ENCODE measurements at regions of chr5 and their contacts with region 1.

Region 1: DNA sequence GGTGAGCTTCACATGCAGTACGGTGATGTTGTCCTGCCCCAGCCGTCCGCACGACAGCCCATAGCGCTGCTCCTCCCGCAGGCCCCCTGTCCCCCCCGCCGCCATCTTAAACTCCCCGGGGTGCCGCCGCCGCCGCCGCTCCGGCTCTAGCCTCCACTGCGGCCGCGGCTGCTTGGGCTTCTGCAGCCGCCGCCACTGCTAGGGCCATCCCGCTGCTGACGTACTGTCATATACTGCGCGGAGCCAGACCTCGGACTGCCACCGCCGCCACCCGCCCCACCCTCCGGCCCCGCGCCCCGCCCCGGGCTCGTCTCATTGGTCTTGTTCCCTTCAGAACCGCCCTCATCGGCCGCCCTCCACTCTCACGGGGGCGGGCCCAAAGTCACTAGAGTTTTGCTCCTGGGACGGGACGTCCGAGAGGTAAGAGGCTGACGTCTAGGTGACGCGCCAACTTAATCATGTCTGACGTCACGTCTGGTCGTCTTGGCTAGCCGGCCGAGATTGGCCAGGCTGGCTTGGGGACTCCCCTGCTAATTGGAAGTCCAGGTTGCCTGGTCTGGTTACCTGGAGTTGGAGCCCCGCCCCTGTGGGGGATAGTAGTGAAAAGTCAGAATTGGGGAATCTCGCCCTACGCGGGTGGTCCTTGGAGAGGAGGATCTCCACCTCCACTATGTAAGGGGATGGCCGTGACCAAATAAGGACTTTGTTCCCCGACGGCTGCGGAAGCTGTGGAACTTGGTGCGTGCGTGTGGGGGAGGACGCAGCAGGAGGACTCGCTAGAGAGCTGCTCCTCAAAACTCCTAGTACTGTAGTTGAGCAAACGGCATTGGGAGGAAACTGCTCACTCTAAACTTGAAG is at the start of gene ELL2:
- DNase-seq: peak; percentile 88 to 99 (median 96)
- ATAC-seq: peak; percentile 89
- H3K4me3 ChIP-seq: peak within 1 kb of the TSS; percentile 64 to 82
- H3K4me3 Mint-ChIP-seq: peak within 1 kb of the TSS; percentile 96
- H3K27ac ChIP-seq: peak within 1 kb of the TSS; percentile 73 to 87
- H3K27ac Mint-ChIP-seq: peak within 1 kb of the TSS; percentile 99
- H3K4me1 ChIP-seq: peaks cover 12% of the 10 kb centered on the region
- H3K4me1 Mint-ChIP-seq: peaks cover 36% of the 10 kb centered on the region
- H3K27me3 ChIP-seq: no peaks in the 10 kb centered on the region
- H3K27me3 Mint-ChIP-seq: no peaks in the 10 kb centered on the region
- CTCF ChIP-seq: no peak
- total RNA-seq, gene ELL2: 189 to 200 TPM

Region 2: GRCh38 chr5:94945656-94946055 is 1016.2 kb before region 1 on chr5:
- CTCF ChIA-PET with region 1: no interaction called
- POLR2A ChIA-PET with region 1: no interaction called
- intact Hi-C with region 1: no loop called
- DNase-seq: no peak
- ATAC-seq: no peak
- H3K4me3 ChIP-seq: no peak overlapping the region
- H3K4me3 Mint-ChIP-seq: no peak overlapping the region
- H3K27ac ChIP-seq: no peak overlapping the region
- H3K27ac Mint-ChIP-seq: no peak overlapping the region
- H3K4me1 ChIP-seq: no peaks in the 10 kb centered on the region
- H3K4me1 Mint-ChIP-seq: no peaks in the 10 kb centered on the region
- H3K27me3 ChIP-seq: no peaks in the 10 kb centered on the region
- H3K27me3 Mint-ChIP-seq: no peaks in the 10 kb centered on the region
- CTCF ChIP-seq: no peak

Region 3: GRCh38 chr5:95554647-95555548 is 406.9 kb before region 1 on chr5 and contains the starts of genes ARSK and SKIC3:
- CTCF ChIA-PET with region 1: no interaction called
- POLR2A ChIA-PET with region 1: no interaction called
- intact Hi-C with region 1: loop called (anchors 1 to 10 kb)
- DNase-seq: peak; percentile 80 to 99 (median 91)
- ATAC-seq: peak; percentile 86
- H3K4me3 ChIP-seq: peak within 1 kb of the TSS; percentile 64 to 77
- H3K4me3 Mint-ChIP-seq: peak within 1 kb of the TSS; percentile 96
- H3K27ac ChIP-seq: peak within 1 kb of the TSS; percentile 74 to 84
- H3K27ac Mint-ChIP-seq: peak within 1 kb of the TSS; percentile 98
- H3K4me1 ChIP-seq: peaks cover 18% of the 10 kb centered on the region
- H3K4me1 Mint-ChIP-seq: peaks cover 47% of the 10 kb centered on the region
- H3K27me3 ChIP-seq: no peaks in the 10 kb centered on the region
- H3K27me3 Mint-ChIP-seq: no peaks in the 10 kb centered on the region
- CTCF ChIP-seq: no peak
- total RNA-seq, gene ARSK: 2.6 to 3.1 TPM
- total RNA-seq, gene SKIC3: 46.7 to 51.8 TPM

Region 4: DNA sequence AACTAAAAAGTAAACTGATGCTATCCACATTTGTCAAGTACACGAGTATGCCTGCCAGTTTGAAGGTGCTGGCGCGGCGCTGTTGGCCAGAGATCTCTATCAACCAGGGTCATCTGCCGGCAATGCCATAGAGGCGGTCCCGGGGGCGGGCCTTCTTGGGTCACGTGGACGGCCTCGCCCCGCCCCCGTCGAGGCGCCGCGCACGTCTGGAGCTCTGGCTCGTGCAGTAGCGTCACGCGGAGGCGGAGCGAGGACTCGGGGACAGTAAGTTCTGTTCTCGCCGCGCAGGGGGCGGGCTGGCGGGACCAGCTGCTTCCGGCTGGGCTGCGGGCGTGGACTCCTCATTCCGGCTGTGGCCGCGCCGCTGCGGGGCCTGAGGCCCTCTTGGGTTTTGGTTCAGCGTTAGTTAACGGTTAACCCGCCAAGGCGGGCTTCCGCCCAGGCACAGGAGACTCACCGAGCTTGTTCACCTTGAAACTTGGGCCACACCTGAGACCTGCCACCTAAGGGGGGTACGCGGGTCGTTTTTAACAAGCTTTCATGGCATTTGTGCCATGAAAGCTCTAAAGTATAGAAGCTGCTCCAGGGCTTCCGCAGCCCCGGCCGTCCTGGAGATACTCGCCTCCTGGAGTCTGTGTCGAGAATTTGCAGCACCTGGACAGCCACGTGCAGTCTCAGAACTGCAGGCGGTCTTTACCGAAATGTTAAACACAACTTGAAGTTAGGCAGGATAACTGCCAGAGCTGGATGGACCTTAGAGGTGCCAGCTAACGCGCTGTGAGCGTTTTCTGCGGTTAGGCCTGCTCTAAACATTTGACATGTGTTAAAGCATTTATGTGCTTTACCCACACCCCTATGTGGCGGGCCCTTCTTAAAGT is 315.1 kb before region 1 on chr5 and contains the start of gene RFESD:
- CTCF ChIA-PET with region 1: no interaction called
- POLR2A ChIA-PET with region 1: no interaction called
- intact Hi-C with region 1: loop called (anchors 1 to 5 kb)
- DNase-seq: peak; percentile 86 to 96 (median 93)
- ATAC-seq: peak; percentile 93
- H3K4me3 ChIP-seq: peak within 1 kb of the TSS; percentile 67 to 77
- H3K4me3 Mint-ChIP-seq: peak within 1 kb of the TSS; percentile 91
- H3K27ac ChIP-seq: peak within 1 kb of the TSS; percentile 76 to 85
- H3K27ac Mint-ChIP-seq: peak within 1 kb of the TSS; percentile 94
- H3K4me1 ChIP-seq: peaks cover 20% of the 10 kb centered on the region
- H3K4me1 Mint-ChIP-seq: peaks cover 40% of the 10 kb centered on the region
- H3K27me3 ChIP-seq: no peaks in the 10 kb centered on the region
- H3K27me3 Mint-ChIP-seq: no peaks in the 10 kb centered on the region
- CTCF ChIP-seq: peak; percentile 22
- total RNA-seq, gene RFESD: 1.00 to 1.7 TPM

Region 5: DNA sequence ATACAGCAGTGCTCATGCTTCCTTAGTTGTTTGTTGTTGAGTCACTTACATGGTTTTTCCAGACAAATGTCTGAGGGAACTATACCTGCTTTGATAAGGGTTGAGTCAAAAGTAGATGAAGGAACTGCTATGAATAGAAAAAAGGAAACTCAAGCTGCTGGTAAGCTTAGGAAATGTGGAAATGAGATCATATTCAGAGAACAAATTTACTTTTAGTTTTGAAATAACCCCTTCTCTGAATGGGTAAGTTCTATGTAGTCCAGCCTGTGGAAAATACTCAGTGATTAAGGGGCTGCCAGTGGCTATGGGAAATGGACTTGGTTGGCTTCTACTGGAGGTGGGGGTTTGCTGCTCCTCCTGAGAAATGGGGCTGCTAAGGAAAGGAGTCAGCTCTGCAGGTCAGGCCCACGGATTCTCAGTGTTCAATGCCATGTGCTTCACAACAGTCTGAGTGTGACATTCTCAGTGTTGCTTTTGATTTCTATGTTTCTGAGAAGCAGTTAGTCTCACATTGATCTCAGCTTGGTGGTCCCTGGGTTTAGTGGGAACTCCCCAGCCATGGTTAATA is 91.7 kb before region 1 on chr5:
- CTCF ChIA-PET with region 1: interaction called, 5 read pairs
- POLR2A ChIA-PET with region 1: interaction called, 10 read pairs
- intact Hi-C with region 1: loop called in 1 of 2 experiments (anchors 2 kb)
- DNase-seq: peak in 1 of 9 experiments; percentile 35
- ATAC-seq: peak; percentile 33
- H3K4me3 ChIP-seq: no peak overlapping the region
- H3K4me3 Mint-ChIP-seq: peak overlapping the region; percentile 53
- H3K27ac ChIP-seq: no peak overlapping the region
- H3K27ac Mint-ChIP-seq: no peak overlapping the region
- H3K4me1 ChIP-seq: peaks cover 32% of the 10 kb centered on the region
- H3K4me1 Mint-ChIP-seq: peaks cover 31% of the 10 kb centered on the region
- H3K27me3 ChIP-seq: no peaks in the 10 kb centered on the region
- H3K27me3 Mint-ChIP-seq: no peaks in the 10 kb centered on the region
- CTCF ChIP-seq: no peak

Region 6: DNA sequence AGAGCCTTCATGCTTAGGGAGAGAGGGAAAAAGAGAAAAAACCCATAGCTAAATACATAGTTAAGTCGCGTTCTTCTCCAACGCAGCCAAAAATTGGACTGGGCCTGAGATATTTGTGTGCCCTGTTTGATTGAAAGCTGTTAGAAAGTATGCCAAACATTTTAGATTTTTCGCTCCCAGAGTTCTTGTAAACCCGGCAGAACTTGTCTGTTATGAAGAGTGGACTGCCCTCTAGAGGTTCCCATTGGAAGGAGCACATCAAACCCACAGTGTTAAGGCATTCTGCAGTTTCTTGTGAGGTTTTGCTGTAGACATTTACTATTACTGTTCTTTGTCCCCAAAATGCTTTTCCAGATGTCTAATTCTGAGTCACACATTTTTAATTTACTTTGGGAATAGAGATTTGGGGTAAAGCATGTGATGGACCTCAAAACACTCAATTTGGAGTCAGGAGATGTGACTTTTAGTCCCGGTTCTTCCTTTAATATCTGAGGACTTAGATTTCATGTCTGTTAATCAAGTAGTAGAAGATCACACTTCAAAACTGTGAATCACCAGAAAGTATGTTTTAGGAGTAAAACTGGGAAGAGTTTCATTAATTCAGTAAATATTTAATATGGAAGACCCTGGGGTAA is 374.6 kb after region 1 on chr5:
- CTCF ChIA-PET with region 1: interaction called, 3 read pairs
- POLR2A ChIA-PET with region 1: no interaction called
- intact Hi-C with region 1: loop called in 1 of 2 experiments (anchors 1 kb)
- DNase-seq: peak; percentile 19 to 81 (median 57)
- ATAC-seq: peak; percentile 97
- H3K4me3 ChIP-seq: no peak overlapping the region
- H3K4me3 Mint-ChIP-seq: no peak overlapping the region
- H3K27ac ChIP-seq: no peak overlapping the region
- H3K27ac Mint-ChIP-seq: no peak overlapping the region
- H3K4me1 ChIP-seq: no peaks in the 10 kb centered on the region
- H3K4me1 Mint-ChIP-seq: no peaks in the 10 kb centered on the region
- H3K27me3 ChIP-seq: no peaks in the 10 kb centered on the region
- H3K27me3 Mint-ChIP-seq: peaks cover 14% of the 10 kb centered on the region
- CTCF ChIP-seq: peak; percentile 92

Region 7: DNA sequence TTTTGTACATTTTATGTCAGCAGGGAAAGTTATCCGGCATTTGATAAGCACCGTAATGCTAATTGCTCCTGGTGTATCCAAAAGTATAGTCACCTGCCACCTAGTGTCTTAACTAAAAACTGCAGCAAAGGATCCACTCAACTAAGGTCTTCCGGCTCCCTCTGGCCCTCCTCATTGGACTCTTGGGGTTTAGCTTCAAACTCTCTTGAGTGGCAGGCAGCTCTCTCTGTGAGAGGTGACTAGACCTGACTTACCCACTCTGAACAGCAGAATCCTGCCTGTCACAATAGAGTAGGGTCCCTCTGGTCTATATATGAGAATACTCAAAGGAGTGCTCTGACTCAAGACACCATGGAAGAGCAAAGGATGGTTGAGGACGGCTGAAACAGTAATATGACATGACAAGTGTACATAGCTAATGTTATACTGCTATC is 640.0 kb after region 1 on chr5:
- CTCF ChIA-PET with region 1: no interaction called
- POLR2A ChIA-PET with region 1: no interaction called
- intact Hi-C with region 1: loop called in 1 of 2 experiments (anchors 5 kb)
- DNase-seq: peak in 8 of 9 experiments; percentile 31 to 78 (median 56)
- ATAC-seq: peak; percentile 85
- H3K4me3 ChIP-seq: no peak overlapping the region
- H3K4me3 Mint-ChIP-seq: no peak overlapping the region
- H3K27ac ChIP-seq: no peak overlapping the region
- H3K27ac Mint-ChIP-seq: no peak overlapping the region
- H3K4me1 ChIP-seq: no peaks in the 10 kb centered on the region
- H3K4me1 Mint-ChIP-seq: no peaks in the 10 kb centered on the region
- H3K27me3 ChIP-seq: no peaks in the 10 kb centered on the region
- H3K27me3 Mint-ChIP-seq: no peaks in the 10 kb centered on the region
- CTCF ChIP-seq: peak; percentile 70